H1 (cell line): ENCODE measurements at regions of chr9 and their contacts with region 1.

Region 1: GRCh38 chr9:101458955-101459631 is 23.5 kb upstream of the ALDOB start:
- DNase-seq: peak in 1 of 2 experiments; percentile 51
- H3K4me3 ChIP-seq: no peak overlapping the region
- H3K27ac ChIP-seq: no peak overlapping the region
- H3K4me1 ChIP-seq: peaks cover 0 to 6% (median 6%) of the 10 kb centered on the region in 4 experiments; a peak in 2 of 7 replicates
- H3K27me3 ChIP-seq: no peaks in the 10 kb centered on the region
- CTCF ChIP-seq: peak in 2 of 3 experiments; percentile 78 to 86; a peak in 3 of 4 replicates
- EP300 ChIP-seq: no peak
- POLR2A ChIP-seq: no peak
- RAD21 ChIP-seq: peak; percentile 89

Region 2: GRCh38 chr9:101477736-101478135 is 18.6 kb after region 1 on chr9:
- CTCF ChIA-PET with region 1: interaction called, 122 read pairs
- POLR2A ChIA-PET with region 1: interaction called, 4 read pairs
- DNase-seq: no peak
- H3K4me3 ChIP-seq: no peak overlapping the region
- H3K27ac ChIP-seq: no peak overlapping the region
- H3K4me1 ChIP-seq: peaks cover 0 to 4% (median 1%) of the 10 kb centered on the region in 4 experiments; a peak in 2 of 7 replicates
- H3K27me3 ChIP-seq: no peaks in the 10 kb centered on the region
- CTCF ChIP-seq: no peak
- EP300 ChIP-seq: no peak
- POLR2A ChIP-seq: no peak
- RAD21 ChIP-seq: no peak

Region 3: GRCh38 chr9:101486693-101487442 is 27.8 kb after region 1 on chr9:
- CTCF ChIA-PET with region 1: interaction called, 78 read pairs
- POLR2A ChIA-PET with region 1: interaction called, 15 read pairs
- DNase-seq: peak; percentile 72 to 87
- H3K4me3 ChIP-seq: peak overlapping the region; percentile 70 to 87 (median 74)
- H3K27ac ChIP-seq: peak overlapping the region; percentile 25; the same call in 1 of the 2 replicates
- H3K4me1 ChIP-seq: peaks cover 5 to 9% (median 7%) of the 10 kb centered on the region in 4 experiments; a peak in 6 of 7 replicates
- H3K27me3 ChIP-seq: peaks cover 0 to 5% (median 2%) of the 10 kb centered on the region in 4 experiments; a peak in 5 of 7 replicates
- CTCF ChIP-seq: peak; percentile 61 to 70 (median 67)
- EP300 ChIP-seq: no peak
- POLR2A ChIP-seq: peak; percentile 17 to 60; a peak in 2 of 3 replicates
- RAD21 ChIP-seq: peak; percentile 67 to 72

Region 4: DNA sequence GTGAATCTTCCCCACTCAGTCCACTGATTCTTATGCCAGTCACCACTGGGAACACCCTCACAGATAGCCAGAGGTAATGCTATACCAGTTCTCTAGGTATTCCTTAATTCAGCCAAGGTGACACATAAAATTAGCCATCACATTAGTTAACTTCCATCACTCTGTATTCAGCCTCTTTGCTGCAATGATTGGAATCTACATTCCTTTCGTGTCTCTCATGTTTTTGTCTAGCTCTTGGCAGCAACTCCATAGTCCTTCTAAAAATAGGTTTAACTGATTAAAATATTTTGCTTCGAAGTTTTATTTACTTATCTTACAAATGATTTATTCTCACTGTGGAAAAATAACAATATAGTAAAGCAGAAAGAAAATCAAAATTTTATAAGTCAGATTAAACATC is 55.0 kb after region 1 on chr9:
- CTCF ChIA-PET with region 1: interaction called, 447 read pairs
- POLR2A ChIA-PET with region 1: no interaction called
- DNase-seq: no peak
- H3K4me3 ChIP-seq: 0 out of 8 replicates have a peak overlapping the region, but pooled peaks of 1 of the 4 experiments have one; percentile 8
- H3K27ac ChIP-seq: no peak overlapping the region
- H3K4me1 ChIP-seq: peaks cover 2 to 16% (median 13%) of the 10 kb centered on the region in 4 experiments; a peak in 6 of 7 replicates
- H3K27me3 ChIP-seq: no peaks in the 10 kb centered on the region
- CTCF ChIP-seq: no peak
- EP300 ChIP-seq: no peak
- POLR2A ChIP-seq: no peak
- RAD21 ChIP-seq: no peak

Region 5: DNA sequence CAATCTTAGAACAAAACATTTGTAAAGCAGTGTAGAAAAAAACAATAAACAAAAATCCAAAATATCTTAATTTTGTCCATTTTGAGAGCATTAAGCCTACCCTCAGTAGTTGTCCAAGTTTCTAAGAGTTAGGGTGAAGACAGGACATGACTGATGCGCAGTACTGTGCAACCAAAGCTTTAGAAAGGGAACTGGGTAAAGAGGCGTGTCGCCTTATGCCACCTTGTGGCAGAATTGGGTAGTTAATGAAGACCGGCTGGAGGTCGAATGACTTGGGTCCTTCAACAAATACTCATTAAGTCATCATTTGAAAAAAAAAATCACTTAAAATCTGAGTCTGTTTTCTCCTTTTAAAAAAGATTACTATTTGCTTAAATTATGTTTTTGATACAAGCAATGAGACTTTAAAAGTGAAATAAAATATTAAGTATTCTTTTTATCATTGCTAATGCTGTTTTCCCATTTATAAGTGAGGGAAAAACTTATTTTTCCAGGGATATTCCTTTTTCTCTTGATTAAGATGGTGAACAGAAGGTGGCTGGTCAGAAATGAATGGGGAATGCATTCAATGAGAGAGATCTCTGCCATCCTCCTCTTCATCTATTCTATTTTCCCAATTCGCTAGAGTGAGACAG is 71.1 kb after region 1 on chr9:
- CTCF ChIA-PET with region 1: interaction called, 447 read pairs
- POLR2A ChIA-PET with region 1: interaction called, 9 read pairs
- DNase-seq: peak in 1 of 2 experiments; percentile 69
- H3K4me3 ChIP-seq: no peak overlapping the region
- H3K27ac ChIP-seq: no peak overlapping the region
- H3K4me1 ChIP-seq: no peaks in the 10 kb centered on the region
- H3K27me3 ChIP-seq: no peaks in the 10 kb centered on the region
- CTCF ChIP-seq: peak; percentile 47 to 87 (median 74)
- EP300 ChIP-seq: no peak
- POLR2A ChIP-seq: no peak
- RAD21 ChIP-seq: peak; percentile 82 to 85

Region 6: DNA sequence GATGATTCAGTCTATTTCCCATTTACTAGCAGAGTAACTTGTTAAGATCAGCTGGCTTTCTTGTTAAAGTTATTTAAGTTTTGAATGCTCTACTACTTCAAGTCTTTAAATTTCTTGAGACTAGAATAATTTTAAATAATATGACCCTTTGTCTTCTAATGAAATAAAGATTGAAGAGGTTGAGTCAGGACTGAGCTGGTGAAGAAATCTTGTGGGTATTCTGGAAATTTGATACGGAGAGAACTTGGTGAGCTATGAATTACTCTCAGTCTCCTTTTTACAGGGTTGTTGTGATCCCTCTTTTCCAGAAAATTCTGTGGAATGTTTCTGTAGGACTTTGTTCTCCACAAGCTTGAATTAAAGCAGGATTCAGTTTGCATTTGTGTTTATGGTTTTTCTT is 103.9 kb after region 1 on chr9:
- CTCF ChIA-PET with region 1: interaction called, 12 read pairs
- POLR2A ChIA-PET with region 1: no interaction called
- DNase-seq: no peak
- H3K4me3 ChIP-seq: no peak overlapping the region
- H3K27ac ChIP-seq: no peak overlapping the region
- H3K4me1 ChIP-seq: no peaks in the 10 kb centered on the region
- H3K27me3 ChIP-seq: no peaks in the 10 kb centered on the region
- CTCF ChIP-seq: no peak
- EP300 ChIP-seq: no peak
- POLR2A ChIP-seq: no peak
- RAD21 ChIP-seq: no peak